Caco-2 (cell line): ENCODE measurements at regions of chr20 and their contacts with region 1.

Region 1: DNA sequence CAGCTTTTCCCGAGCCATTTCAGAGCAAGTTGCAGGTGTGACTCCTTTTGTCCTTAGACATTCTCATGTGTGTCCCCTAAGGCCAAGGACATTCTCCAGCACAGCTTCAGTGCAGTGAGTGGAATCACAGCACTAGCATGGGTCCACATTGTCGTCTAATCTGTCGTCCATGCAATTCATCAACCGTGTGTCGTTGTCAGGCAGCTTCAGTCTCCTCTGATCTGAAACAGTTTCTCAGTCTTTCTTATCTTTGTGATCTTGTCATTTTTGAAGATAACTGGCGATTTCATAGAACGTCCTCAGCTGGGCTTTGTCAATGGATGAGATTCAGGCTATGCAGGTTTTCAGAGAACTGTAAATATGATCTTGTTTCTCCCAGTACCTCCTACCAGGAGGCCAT is 31.7 kb downstream of the CST2 start:
- DNase-seq: peak; percentile 51 to 68
- H3K4me3 ChIP-seq: no peak overlapping the region
- H3K4me3 Mint-ChIP-seq: no peak overlapping the region
- H3K27ac Mint-ChIP-seq: no peak overlapping the region
- H3K4me1 ChIP-seq: peaks cover 9% of the 10 kb centered on the region; the same call in 1 of the 2 replicates
- H3K4me1 Mint-ChIP-seq: peaks cover 14% of the 10 kb centered on the region
- H3K27me3 ChIP-seq: no peaks in the 10 kb centered on the region
- H3K27me3 Mint-ChIP-seq: peaks cover 4% of the 10 kb centered on the region
- CTCF ChIP-seq: no peak

Region 2: DNA sequence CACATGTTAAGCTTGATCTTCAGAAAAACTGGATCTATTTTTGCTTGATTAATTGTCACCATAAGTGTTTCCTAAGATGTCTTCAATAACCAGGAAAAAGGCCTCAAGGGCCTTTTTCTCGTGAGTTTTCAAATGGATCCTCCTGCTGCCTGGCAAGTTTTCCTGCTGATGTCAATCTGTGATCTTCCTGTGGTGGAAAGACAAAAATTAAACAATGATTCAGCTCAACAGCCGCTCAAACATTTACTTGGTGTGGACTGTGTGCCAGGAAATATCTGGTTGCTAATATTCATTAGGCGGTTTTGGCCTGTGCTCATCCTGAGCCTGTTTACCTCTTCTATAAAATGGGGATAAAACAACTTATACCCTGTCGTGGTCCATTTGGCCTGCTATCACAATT is 795.1 kb before region 1 on chr20:
- CTCF ChIA-PET with region 1: no interaction called
- POLR2A ChIA-PET with region 1: no interaction called
- intact Hi-C with region 1: no loop called
- DNase-seq: no peak
- H3K4me3 ChIP-seq: no peak overlapping the region
- H3K4me3 Mint-ChIP-seq: no peak overlapping the region
- H3K27ac Mint-ChIP-seq: no peak overlapping the region
- H3K4me1 ChIP-seq: no peaks in the 10 kb centered on the region
- H3K4me1 Mint-ChIP-seq: no peaks in the 10 kb centered on the region
- H3K27me3 ChIP-seq: no peaks in the 10 kb centered on the region
- H3K27me3 Mint-ChIP-seq: no peaks in the 10 kb centered on the region
- CTCF ChIP-seq: no peak

Region 3: GRCh38 chr20:23721962-23722361 is 72.9 kb before region 1 on chr20:
- CTCF ChIA-PET with region 1: no interaction called
- POLR2A ChIA-PET with region 1: no interaction called
- intact Hi-C with region 1: loop called (anchors 5 kb)
- DNase-seq: no peak
- H3K4me3 ChIP-seq: no peak overlapping the region
- H3K4me3 Mint-ChIP-seq: no peak overlapping the region
- H3K27ac Mint-ChIP-seq: no peak overlapping the region
- H3K4me1 ChIP-seq: peaks cover 5% of the 10 kb centered on the region; the same call in 1 of the 2 replicates
- H3K4me1 Mint-ChIP-seq: peaks cover 13% of the 10 kb centered on the region
- H3K27me3 ChIP-seq: no peaks in the 10 kb centered on the region
- H3K27me3 Mint-ChIP-seq: no peaks in the 10 kb centered on the region
- CTCF ChIP-seq: no peak

Region 4: DNA sequence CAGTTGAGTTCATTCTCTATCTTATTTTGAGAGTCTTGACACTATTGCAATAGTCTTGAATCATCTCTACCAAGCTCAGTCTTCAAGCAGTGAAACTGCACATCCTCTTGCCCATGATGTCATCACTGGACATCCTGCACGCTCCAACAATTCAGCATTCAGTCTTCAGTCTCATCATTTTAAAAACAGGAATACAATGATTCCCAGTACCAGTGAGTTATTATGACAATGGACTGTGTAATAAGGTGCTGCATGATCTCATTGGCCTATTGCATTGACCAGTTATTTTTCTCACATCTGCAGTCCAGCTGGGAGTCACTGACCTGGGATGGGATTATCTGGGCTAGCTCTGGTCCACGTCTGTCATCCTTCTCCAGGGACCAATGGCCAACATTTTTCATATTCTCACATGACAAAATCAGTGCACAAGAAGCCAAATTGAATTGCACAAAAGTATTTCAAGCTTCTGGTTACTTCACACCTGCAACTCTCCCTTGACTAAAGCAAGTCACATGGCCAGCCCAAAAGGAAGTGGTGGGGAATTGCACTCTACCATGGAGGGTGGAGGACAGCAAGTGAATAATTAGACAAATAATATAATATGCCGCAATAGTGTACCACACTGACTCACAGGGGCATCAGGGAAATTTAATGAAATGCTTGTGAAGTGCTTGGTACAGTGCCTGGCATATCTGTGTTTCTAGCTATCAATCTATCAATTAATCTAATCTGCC is 38.1 kb after region 1 on chr20:
- CTCF ChIA-PET with region 1: no interaction called
- POLR2A ChIA-PET with region 1: no interaction called
- intact Hi-C with region 1: no loop called
- DNase-seq: no peak
- H3K4me3 ChIP-seq: no peak overlapping the region
- H3K4me3 Mint-ChIP-seq: no peak overlapping the region
- H3K27ac Mint-ChIP-seq: peak overlapping the region; percentile 63
- H3K4me1 ChIP-seq: peaks cover 9% of the 10 kb centered on the region; the same call in 1 of the 2 replicates
- H3K4me1 Mint-ChIP-seq: peaks cover 22% of the 10 kb centered on the region
- H3K27me3 ChIP-seq: no peaks in the 10 kb centered on the region
- H3K27me3 Mint-ChIP-seq: peaks cover 2% of the 10 kb centered on the region
- CTCF ChIP-seq: no peak

Region 5: DNA sequence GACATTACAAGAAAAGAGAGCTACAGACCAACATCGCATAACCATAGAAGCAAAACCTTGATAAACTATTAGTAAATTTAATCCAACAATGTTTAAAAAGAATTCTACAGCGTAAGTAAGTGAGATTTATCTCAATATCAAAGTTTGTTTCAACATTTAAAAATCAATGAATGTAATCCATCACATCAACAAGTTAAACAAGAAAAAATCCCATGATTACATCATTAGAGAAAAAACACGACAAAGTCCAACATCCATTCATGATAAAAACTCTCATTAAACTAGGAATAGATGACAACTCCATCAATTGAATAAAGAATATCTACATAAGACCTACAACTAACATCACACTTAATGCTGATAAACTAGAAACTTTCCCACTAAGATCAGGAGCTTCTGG is 432.8 kb after region 1 on chr20:
- CTCF ChIA-PET with region 1: no interaction called
- POLR2A ChIA-PET with region 1: no interaction called
- intact Hi-C with region 1: no loop called
- DNase-seq: no peak
- H3K4me3 ChIP-seq: no peak overlapping the region
- H3K4me3 Mint-ChIP-seq: no peak overlapping the region
- H3K27ac Mint-ChIP-seq: no peak overlapping the region
- H3K4me1 ChIP-seq: no peaks in the 10 kb centered on the region
- H3K4me1 Mint-ChIP-seq: no peaks in the 10 kb centered on the region
- H3K27me3 ChIP-seq: no peaks in the 10 kb centered on the region
- H3K27me3 Mint-ChIP-seq: peaks cover 17% of the 10 kb centered on the region
- CTCF ChIP-seq: no peak